Ovary (tissue), 10 donors: ENCODE measurements at regions of chr22 and their contacts with region 1.

Region 1: GRCh38 chr22:30079952-30080533 is at the start of gene HORMAD2:
- DNase-seq: no peak
- H3K4me3 ChIP-seq: no peak within 1 kb of the TSS
- H3K27ac ChIP-seq: no peak within 1 kb of the TSS
- H3K4me1 ChIP-seq: no peaks in the 10 kb centered on the region
- H3K27me3 ChIP-seq: no peaks in the 10 kb centered on the region
- CTCF ChIP-seq: no peak
- EP300 ChIP-seq: no peak
- POLR2A ChIP-seq: no peak
- total RNA-seq, gene HORMAD2: not detected

Region 2: DNA sequence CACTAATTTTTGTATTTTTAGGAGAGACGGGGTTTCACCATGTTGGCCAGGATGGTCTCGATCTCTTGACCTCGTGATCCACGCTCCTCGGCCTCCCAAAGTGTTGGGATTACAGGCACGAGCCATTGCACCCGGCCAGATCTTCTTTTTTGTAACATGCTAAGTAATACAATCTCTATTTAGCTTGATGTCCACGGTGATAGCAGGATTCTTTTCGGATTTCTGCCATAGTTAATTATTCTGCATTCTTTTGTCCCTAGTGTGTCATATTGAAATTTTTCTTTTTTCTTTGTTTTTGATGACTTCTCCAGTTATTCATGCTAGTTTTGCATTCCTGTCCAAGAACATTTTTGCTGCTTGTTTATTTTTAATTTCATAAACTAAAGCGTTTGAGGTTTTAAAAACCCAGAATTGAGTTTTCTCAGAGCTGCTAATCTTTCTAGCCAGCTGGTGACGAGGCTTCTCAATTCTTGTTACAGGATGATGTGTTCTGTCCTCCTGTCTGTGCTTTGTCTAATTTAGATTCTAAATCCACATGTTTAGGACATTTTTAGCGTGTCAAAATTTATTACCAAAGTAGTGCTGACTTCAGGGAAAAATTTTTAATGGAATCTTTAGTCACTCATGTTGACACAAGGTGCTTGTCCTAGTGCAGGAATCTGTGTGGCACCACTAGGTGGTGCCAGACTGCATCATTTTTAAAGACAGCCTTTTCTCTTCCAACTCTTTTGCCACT is 454.8 kb before region 1 on chr22:
- intact Hi-C with region 1: loop called in 1 of 4 experiments (anchors 10 kb)
- DNase-seq: peak; percentile 39 to 68 (median 55)
- H3K4me3 ChIP-seq: no peak overlapping the region
- H3K27ac ChIP-seq: peak overlapping the region in 1 of 2 donors; percentile 27
- H3K4me1 ChIP-seq: peaks cover 10% of the 10 kb centered on the region
- H3K27me3 ChIP-seq: no peaks in the 10 kb centered on the region
- CTCF ChIP-seq: peak; percentile 45 to 66 (median 59)
- EP300 ChIP-seq: no peak
- POLR2A ChIP-seq: no peak

Region 3: DNA sequence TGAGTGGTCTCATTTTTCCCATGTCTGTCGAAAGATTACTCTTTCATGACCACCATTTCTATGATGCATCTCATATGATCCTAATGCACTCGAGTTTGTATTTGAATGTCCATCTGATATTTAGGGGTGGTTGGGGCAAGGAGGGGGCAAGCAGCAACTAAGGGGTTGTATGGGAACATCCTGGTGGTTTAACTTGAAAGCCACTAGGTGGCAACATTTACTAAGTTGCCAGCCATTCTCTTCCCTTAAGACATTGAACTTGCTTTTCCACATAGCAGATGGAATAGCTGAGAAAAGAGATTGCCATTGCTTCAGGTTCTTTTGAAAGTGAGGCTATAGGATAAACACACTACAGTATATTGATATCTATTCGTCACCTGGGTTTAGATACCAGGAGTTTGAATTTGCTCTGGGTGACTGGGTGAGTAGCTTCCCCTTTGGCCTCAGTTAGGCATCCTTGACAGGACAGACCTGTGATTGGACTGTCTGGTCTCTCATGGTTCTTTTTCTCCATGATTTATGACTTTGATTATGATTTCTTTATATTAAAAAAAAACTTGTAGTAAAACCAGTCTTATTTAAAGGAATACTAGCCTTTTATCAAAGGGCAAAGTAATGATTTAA is 444.2 kb before region 1 on chr22:
- intact Hi-C with region 1: loop called in 1 of 4 experiments (anchors 5 kb)
- DNase-seq: no peak
- H3K4me3 ChIP-seq: no peak overlapping the region
- H3K27ac ChIP-seq: no peak overlapping the region
- H3K4me1 ChIP-seq: peaks cover 1% of the 10 kb centered on the region
- H3K27me3 ChIP-seq: no peaks in the 10 kb centered on the region
- CTCF ChIP-seq: peak in 1 of 3 donors; percentile 30
- EP300 ChIP-seq: no peak
- POLR2A ChIP-seq: no peak

Region 4: GRCh38 chr22:29689880-29690213 is 390.2 kb before region 1 on chr22:
- intact Hi-C with region 1: loop called in 1 of 4 experiments (anchors 10 kb)
- DNase-seq: peak; percentile 39 to 64 (median 62)
- H3K4me3 ChIP-seq: no peak overlapping the region
- H3K27ac ChIP-seq: no peak overlapping the region
- H3K4me1 ChIP-seq: peaks cover 11% of the 10 kb centered on the region
- H3K27me3 ChIP-seq: no peaks in the 10 kb centered on the region
- CTCF ChIP-seq: peak; percentile 11 to 41 (median 30)
- EP300 ChIP-seq: no peak
- POLR2A ChIP-seq: no peak

Region 5: GRCh38 chr22:30005213-30005857 is 74.7 kb before region 1 on chr22:
- intact Hi-C with region 1: no loop called
- DNase-seq: peak; percentile 47 to 84 (median 80)
- H3K4me3 ChIP-seq: no peak overlapping the region
- H3K27ac ChIP-seq: no peak overlapping the region
- H3K4me1 ChIP-seq: no peaks in the 10 kb centered on the region
- H3K27me3 ChIP-seq: no peaks in the 10 kb centered on the region
- CTCF ChIP-seq: peak; percentile 65 to 88 (median 81)
- EP300 ChIP-seq: no peak
- POLR2A ChIP-seq: no peak

Region 6: DNA sequence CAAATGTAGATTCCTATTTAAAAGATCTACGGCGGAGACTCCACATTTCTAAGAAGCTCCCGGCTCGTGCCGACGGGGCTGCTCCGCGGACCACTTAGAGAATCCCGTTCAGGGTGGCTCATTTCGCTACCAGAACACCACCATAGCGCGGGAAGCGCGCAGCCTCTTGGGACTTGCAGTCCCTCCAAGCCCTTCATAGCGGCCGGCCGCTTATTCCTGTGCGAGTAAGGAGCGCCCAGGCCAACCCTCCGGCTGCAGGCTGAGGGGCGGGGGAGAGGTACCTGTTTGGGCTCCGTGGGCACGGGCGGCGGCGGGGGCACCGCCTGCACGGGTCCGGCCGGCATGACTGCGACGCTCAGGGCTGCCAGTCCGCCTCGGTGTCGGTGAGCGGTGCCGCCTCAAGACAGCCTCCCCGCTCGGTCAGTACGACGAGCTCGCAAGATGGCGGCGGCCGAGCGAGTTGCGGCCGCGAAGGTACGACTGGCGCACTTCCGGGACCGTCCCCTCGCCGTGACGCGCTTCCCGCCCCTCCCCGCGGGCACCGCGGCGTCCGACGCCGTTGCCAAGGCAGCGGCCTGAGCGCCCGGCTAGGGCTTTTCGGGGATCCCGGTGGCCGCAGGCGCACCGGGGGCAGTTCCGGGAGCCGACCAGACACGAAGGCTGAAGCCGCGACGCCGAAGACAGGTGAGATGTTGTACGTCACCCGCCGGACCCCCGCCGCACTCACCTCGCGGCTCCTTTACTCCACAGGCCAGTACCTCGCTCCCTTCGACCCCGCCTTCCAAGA is 276.6 kb after region 1 on chr22 and contains the starts of genes CCDC157 and SF3A1:
- intact Hi-C with region 1: no loop called
- DNase-seq: peak; percentile 83 to 93 (median 88)
- H3K4me3 ChIP-seq: peak within 1 kb of the TSS; percentile 68
- H3K27ac ChIP-seq: peak within 1 kb of the TSS; percentile 93 to 96
- H3K4me1 ChIP-seq: peaks cover 8% of the 10 kb centered on the region
- H3K27me3 ChIP-seq: no peaks in the 10 kb centered on the region
- CTCF ChIP-seq: peak in 1 of 3 donors; percentile 37
- EP300 ChIP-seq: no peak
- POLR2A ChIP-seq: peak; percentile 97
- total RNA-seq, gene CCDC157: 2.0 to 28.0 (median 2.7) TPM
- total RNA-seq, gene SF3A1: 36.4 to 211 (median 176) TPM